PC-9 (cell line): ENCODE measurements at regions of chr3 and their contacts with region 1.

Region 1: DNA sequence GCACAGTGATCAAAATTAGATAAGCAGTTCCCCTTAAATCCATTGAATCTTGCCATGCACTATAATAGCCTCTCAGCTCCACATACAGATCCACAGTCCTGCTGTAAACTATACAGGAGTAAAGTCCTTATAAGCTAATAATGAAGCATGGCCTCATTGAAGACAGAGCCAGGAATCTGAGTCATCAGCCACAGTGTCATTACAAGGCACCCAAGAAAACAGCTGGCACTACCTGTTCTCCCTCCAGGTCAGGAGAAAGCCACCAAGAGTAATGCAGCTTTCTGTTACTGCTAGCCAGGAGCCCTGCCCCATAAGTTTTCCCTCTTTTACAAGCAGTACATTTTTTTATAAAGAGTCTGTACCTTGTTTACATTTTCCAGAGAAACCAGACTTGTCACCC is 27.3 kb downstream of the WDR49 start:
- DNase-seq: peak in 1 of 2 experiments; percentile 16
- H3K4me3 ChIP-seq: no peak overlapping the region
- H3K27ac ChIP-seq: no peak overlapping the region
- H3K4me1 ChIP-seq: no peaks in the 10 kb centered on the region
- H3K27me3 ChIP-seq: no peaks in the 10 kb centered on the region
- CTCF ChIP-seq: no peak

Region 2: DNA sequence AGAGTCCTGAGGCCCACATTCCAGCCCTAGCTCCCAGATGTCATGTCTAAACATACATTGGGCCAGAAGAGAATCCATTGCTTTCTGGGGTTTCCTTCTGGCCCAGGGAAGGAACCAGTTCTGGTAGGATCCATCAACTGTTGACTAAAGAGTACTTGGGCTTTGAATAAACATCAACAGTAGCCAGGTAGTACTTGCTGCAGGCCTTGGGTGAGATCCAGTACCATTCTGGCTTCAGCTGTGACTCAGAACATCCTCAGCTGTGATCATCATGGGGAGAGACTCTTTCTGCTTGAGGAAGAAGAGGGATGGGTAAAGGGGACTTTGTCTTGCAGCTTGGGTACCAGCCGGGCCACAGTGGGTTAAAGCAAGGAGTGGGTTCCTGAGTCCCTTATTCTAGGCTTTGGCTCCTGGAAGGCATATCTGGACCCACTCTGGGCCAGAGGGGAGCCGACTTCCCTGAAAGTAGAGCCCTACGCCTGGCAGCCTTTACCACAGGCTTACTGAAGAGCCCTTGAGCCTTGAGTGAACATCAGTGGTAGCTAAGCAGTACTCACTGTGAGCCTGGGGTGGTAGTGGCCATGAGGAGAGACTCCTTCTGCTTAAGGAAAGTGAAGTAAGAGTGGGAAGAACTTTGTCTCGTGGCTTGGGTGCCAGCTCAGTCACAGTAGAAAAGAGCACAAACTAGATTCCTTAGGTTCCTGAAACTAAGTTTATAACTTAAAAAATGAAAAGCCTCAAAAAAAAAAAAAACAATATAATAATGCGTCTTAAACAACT is 341.0 kb after region 1 on chr3:
- CTCF ChIA-PET with region 1: no interaction called
- POLR2A ChIA-PET with region 1: interaction called, 17 read pairs
- intact Hi-C with region 1: no loop called
- DNase-seq: no peak
- H3K4me3 ChIP-seq: no peak overlapping the region
- H3K27ac ChIP-seq: no peak overlapping the region
- H3K4me1 ChIP-seq: no peaks in the 10 kb centered on the region
- H3K27me3 ChIP-seq: no peaks in the 10 kb centered on the region
- CTCF ChIP-seq: no peak

Region 3: GRCh38 chr3:168165390-168166269 is 539.1 kb after region 1 on chr3:
- CTCF ChIA-PET with region 1: no interaction called
- POLR2A ChIA-PET with region 1: no interaction called
- intact Hi-C with region 1: no loop called
- DNase-seq: peak; percentile 36 to 46
- H3K4me3 ChIP-seq: no peak overlapping the region
- H3K27ac ChIP-seq: no peak overlapping the region
- H3K4me1 ChIP-seq: no peaks in the 10 kb centered on the region
- H3K27me3 ChIP-seq: no peaks in the 10 kb centered on the region
- CTCF ChIP-seq: peak; percentile 87